ENCODE measurements at regions of chr1 and their contacts with region 1.

Region 1: DNA sequence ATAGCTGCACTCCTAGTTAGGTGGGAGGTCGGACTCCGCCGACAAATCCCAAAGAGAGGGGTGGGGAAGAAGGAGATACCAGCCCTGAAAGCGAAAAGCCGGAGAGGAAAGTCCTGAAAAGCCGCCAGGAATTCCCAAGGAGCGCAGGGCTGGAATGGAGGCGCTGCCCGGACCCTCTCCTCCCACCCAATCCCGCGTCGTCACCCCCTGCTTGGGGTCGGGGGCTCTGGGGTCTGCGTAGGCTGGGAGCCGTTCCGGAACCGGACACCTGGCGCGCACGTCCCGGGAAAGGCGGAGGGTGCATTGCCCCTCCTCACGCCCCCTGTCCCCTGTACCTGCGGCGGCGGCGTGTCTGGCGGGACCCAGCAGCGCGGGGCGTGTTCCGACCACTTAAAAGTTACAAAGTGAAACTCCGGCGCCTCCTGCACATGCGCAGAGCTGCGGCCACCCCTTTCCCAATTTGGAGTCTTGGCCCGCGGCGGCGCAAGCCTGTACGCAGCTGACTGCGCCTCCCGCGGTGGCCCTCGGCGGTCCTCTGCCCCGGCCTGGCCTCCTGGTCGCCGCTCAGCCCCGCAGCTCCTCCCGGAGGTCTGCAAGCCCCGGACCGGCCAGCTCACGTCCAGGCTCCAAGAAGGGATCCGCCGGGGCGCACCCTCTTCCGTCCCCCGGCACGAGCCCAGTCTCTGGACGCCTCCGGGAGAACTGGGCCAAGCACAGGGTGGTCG is at the start of gene TMEM63A:
- DNase-seq: peak; percentile 90
- H3K4me3 Mint-ChIP-seq: peak within 1 kb of the TSS; percentile 89
- H3K27ac Mint-ChIP-seq: peak within 1 kb of the TSS; percentile 88
- H3K4me1 Mint-ChIP-seq: peaks cover 50% of the 10 kb centered on the region
- H3K27me3 Mint-ChIP-seq: peaks cover 9% of the 10 kb centered on the region
- total RNA-seq, gene TMEM63A: 126 to 127 TPM

Region 2: DNA sequence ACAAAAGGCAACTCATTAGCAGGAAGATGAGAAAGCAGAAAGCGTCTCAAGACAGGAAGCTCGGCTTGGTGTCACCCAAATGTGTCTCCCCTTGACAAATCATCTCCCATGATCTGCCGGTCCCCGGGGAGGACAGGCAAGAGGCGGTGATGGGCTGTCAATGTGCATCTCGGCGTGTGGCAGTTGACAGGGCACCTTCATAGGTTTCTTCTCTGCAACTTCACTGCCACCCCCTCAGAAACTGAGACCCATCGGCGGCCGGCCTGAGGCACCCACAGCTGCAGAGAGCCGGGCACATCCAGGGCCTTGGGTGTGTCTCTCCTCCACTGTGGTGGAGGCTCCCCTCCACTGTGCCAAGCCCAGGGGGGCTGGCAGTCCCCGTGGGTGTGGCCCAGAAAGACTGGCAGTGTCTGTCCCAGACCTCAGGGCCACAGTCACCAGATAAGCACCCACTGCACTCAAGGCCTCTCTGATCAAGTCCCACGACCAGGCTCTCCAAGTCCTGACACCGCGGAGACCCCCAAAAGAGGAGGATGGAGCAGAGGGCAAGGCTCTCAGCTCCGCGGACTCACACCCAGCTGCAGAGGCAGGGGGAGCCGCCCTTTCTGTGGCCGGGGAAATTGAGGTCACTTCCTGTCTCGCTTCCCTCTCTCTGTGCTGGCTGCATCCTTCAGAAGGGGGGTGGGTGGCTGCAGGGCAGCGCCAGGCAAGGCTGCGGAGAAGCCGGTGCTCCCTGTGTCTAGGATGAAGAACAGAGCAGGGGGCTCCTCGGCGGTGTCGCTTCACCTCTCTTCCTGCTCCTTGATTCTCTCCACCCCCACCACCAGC is 414.7 kb before region 1 on chr1:
- CTCF ChIA-PET with region 1: interaction called, 9 read pairs
- POLR2A ChIA-PET with region 1: interaction called, 29 read pairs
- DNase-seq: peak; percentile 91
- H3K4me3 Mint-ChIP-seq: peak overlapping the region; percentile 91
- H3K27ac Mint-ChIP-seq: peak overlapping the region; percentile 99
- H3K4me1 Mint-ChIP-seq: peaks cover 64% of the 10 kb centered on the region
- H3K27me3 Mint-ChIP-seq: no peaks in the 10 kb centered on the region

Region 3: DNA sequence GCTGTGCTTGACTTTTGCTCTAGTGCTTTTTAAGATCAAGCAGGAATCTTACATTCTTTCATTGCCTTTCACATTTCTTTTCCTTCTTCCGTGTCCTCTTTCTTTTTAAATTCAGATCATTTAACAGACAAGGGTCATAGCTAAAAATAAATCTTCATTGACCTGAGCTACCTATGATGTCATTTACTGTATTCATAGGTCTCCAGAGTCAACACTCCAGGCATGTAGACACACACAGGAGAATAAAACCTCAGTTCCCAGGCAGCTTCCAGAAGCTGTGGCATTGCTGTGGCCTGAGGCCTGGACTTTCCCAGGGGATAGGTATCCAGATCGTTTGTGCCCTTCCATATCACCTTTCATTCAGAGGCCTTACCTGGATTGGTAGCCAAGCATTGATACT is 190.8 kb before region 1 on chr1:
- CTCF ChIA-PET with region 1: no interaction called
- POLR2A ChIA-PET with region 1: no interaction called
- DNase-seq: no peak
- H3K4me3 Mint-ChIP-seq: no peak overlapping the region
- H3K27ac Mint-ChIP-seq: no peak overlapping the region
- H3K4me1 Mint-ChIP-seq: no peaks in the 10 kb centered on the region
- H3K27me3 Mint-ChIP-seq: peaks cover 3% of the 10 kb centered on the region

Region 4: GRCh38 chr1:225866061-225866837 is 15.9 kb before region 1 on chr1:
- CTCF ChIA-PET with region 1: interaction called, 7 read pairs
- POLR2A ChIA-PET with region 1: interaction called, 40 read pairs
- DNase-seq: peak; percentile 77
- H3K4me3 Mint-ChIP-seq: no peak overlapping the region
- H3K27ac Mint-ChIP-seq: peak overlapping the region; percentile 50
- H3K4me1 Mint-ChIP-seq: peaks cover 39% of the 10 kb centered on the region
- H3K27me3 Mint-ChIP-seq: no peaks in the 10 kb centered on the region

Region 5: GRCh38 chr1:225871359-225872074 is 10.6 kb before region 1 on chr1:
- CTCF ChIA-PET with region 1: interaction called, 8 read pairs
- POLR2A ChIA-PET with region 1: interaction called, 40 read pairs
- DNase-seq: peak; percentile 44
- H3K4me3 Mint-ChIP-seq: no peak overlapping the region
- H3K27ac Mint-ChIP-seq: peak overlapping the region; percentile 44
- H3K4me1 Mint-ChIP-seq: peaks cover 58% of the 10 kb centered on the region
- H3K27me3 Mint-ChIP-seq: no peaks in the 10 kb centered on the region

Region 6: DNA sequence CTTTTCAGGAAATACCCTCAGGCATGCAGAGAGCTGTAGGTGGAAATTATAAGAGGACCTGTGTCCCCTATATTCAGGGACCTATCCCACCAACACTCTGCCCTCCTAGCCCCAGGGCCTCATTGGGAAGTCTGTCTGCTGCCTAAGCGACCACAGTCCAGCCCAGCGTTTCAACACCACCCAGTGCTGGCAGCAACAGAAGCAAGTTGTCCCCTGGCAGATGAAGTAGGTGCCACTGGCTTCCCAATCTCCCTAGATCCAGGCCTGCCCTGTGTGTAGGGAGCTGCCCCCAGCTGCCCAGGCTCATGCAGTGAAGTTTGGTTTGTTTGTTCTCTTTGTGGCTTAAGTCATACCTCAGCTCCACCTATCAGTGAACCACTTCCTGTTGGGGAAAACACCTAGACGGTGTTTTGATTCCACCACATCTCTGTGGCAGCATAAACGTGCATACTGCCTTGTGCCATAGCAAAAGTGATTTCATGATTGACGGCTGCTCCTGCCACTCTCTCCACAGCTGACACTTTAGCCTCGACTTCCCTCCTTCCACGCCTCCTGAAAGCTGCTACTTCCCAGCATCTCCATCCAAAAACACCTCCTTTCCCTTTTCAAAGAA is 14.9 kb after region 1 on chr1:
- CTCF ChIA-PET with region 1: interaction called, 27 read pairs
- POLR2A ChIA-PET with region 1: interaction called, 83 read pairs
- DNase-seq: peak; percentile 83
- H3K4me3 Mint-ChIP-seq: peak overlapping the region; percentile 12
- H3K27ac Mint-ChIP-seq: peak overlapping the region; percentile 64
- H3K4me1 Mint-ChIP-seq: peaks cover 36% of the 10 kb centered on the region
- H3K27me3 Mint-ChIP-seq: peaks cover 21% of the 10 kb centered on the region

Region 7: DNA sequence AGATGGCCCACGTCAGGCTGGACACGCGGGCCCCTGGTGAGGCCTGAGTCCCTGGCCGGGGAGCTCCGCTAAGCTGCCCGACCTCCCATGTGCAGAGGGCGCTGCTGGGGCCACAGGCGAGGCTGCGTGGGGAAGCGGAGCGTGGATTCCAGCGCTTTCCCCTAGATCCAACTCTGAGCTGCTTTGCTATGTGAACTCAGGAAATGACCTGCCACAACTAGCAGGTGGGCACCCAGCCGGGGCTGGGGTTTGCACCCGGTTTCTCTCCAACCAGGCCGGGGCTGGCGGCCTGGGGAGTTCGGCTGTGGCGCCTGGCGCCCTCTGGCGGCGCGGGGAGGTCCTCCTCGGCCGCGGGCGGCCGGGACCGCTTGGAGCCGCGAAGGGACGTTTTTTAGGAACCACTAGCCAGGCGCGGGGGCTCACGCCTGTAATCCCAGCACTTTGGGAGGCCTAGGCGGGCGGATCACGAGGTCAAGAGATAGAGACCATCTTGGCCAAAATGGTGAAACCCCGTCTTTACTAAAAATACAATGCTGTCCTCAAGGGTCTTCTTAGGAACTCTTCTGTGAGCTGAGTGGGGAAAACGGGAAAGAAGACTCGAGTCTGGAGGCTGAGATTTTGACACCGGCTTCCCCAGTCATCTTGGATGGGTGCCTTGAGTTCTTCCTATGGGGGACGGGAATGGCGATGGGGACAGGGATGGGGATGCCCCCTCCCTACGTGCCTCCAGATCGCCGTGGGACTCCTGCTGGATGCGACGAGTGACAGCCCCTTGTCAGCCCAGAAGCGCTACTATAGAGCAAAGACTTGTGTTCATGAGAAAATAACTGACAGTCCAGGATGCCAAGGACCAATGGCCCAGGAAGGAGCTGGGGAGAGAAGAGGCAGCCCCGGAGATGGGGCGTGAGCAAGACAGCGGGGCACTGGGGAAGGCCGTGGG is 29.3 kb after region 1 on chr1:
- CTCF ChIA-PET with region 1: interaction called, 33 read pairs
- POLR2A ChIA-PET with region 1: interaction called, 12 read pairs
- DNase-seq: peak; percentile 74
- H3K4me3 Mint-ChIP-seq: no peak overlapping the region
- H3K27ac Mint-ChIP-seq: no peak overlapping the region
- H3K4me1 Mint-ChIP-seq: peaks cover 4% of the 10 kb centered on the region
- H3K27me3 Mint-ChIP-seq: peaks cover 6% of the 10 kb centered on the region

Region 8: GRCh38 chr1:225923692-225924555 is 41.8 kb after region 1 on chr1 and contains the start of gene PYCR2:
- CTCF ChIA-PET with region 1: interaction called, 3 read pairs
- POLR2A ChIA-PET with region 1: interaction called, 62 read pairs
- DNase-seq: peak; percentile 97
- H3K4me3 Mint-ChIP-seq: peak within 1 kb of the TSS; percentile 96
- H3K27ac Mint-ChIP-seq: peak within 1 kb of the TSS; percentile 89
- H3K4me1 Mint-ChIP-seq: peaks cover 54% of the 10 kb centered on the region
- H3K27me3 Mint-ChIP-seq: no peaks in the 10 kb centered on the region
- total RNA-seq, gene PYCR2: 101 to 105 TPM